Tibial artery (tissue), 4 donors: ENCODE measurements at regions of chr18 and their contacts with region 1.

Region 1: DNA sequence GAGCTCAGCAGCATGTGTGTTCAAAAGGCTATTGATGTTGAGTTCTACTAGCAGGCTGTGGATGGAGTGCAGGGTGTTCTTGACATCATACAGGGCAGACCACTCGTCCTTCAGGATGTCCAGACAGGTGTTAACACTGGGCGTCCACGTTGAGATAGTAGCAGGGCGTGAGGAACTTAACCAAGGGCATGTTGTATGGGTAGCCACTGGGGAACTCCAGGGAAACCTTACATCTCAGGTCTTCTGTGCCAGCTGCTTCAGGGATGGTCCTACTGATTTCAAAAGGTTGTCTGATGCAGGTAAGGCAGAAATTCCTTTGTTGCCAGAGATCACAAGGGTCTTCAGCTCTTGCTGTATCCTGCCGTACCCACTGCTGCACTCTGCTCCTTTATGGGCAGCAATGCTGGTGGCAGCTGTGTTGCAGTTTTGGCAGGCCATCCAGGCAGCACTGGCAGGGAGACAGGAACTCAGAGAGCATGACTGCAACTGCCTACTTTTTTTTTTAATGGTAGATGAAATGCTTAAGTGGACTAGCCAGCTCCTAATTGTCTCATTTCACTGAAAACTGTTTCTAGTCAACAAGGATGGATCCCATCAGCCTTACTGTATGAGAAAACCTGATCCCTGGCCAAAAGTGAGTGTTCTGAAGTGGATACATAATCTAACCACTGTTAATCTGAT is 32.4 kb upstream of the RBBP8 start:
- DNase-seq: no peak
- H3K4me3 ChIP-seq: no peak overlapping the region
- H3K27ac ChIP-seq: no peak overlapping the region
- H3K4me1 ChIP-seq: no peaks in the 10 kb centered on the region
- H3K27me3 ChIP-seq: no peaks in the 10 kb centered on the region
- CTCF ChIP-seq: no peak

Region 2: DNA sequence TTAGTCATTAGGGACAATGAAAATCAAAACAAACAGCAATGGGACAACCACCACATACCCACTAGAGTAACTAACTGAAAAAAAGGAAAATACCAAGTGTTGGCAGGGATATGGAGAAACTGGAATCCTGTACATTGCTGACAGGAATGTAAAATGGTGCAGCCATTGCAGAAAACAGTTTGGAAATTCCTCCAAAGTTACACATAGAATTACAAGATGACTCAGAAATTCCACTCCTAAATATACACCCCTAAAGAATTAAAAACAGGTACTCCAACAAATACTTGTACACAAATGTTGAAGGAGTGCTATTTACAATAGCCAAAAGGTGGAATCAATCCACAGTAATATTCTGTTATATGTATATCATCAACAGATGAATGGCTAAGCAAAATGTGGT is 1900.0 kb before region 1 on chr18:
- intact Hi-C with region 1: no loop called
- DNase-seq: no peak
- H3K4me3 ChIP-seq: no peak overlapping the region
- H3K27ac ChIP-seq: peak overlapping the region in 1 of 2 donors; percentile 17
- H3K4me1 ChIP-seq: peaks cover 0 to 82% (median 14%) of the 10 kb centered on the region in 4 donors
- H3K27me3 ChIP-seq: no peaks in the 10 kb centered on the region
- CTCF ChIP-seq: no peak

Region 3: DNA sequence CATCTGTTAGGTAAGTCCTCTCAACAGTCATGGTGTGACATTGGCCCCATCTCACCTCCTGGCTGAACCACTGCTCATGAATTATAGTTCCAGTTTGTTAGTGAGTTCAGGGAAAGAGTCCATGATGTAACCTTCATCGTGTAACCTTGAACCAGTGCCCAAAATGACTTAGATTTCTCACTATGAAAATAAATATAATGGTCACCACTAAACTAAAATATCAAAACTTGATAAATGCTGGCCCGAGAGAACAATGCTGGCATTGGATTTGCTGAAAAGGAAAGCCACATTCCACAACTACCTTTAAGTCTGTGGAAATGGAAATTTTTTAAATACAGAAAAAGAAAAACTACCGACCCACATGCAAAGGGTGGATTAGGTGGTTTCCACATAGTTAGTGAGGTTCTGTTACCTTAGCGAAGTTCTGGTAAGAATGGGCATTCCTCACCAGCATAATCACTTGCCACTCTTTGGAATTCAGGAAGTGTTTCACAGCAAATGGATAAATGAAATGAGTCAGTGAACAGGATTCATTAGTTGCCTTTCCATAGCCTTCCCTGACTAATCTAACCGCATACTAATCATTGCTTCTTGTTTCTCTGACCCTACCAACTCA is 349.1 kb before region 1 on chr18:
- intact Hi-C with region 1: no loop called
- DNase-seq: no peak
- H3K4me3 ChIP-seq: no peak overlapping the region
- H3K27ac ChIP-seq: peak overlapping the region; percentile 21 to 37
- H3K4me1 ChIP-seq: peaks cover 0 to 39% (median 11%) of the 10 kb centered on the region in 4 donors
- H3K27me3 ChIP-seq: no peaks in the 10 kb centered on the region
- CTCF ChIP-seq: no peak

Region 4: DNA sequence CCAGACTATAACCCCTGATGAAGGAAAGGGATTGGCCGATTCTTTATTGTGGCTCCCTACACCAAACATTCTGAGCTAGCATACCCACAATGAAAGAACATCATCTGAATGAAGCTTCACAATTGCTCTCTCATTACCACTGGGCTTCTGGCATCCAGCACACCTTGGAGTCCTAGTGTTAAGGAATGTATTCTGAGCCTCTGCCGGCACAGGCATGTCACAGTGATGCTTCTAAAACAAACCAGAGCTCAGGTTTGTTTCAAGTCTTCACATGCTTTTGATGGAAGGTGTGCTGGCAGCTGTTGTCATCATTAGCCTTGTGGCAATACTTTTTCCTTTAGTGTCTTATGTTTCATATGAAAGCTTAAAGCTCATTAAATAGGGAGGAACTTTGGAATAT is 43.8 kb before region 1 on chr18:
- intact Hi-C with region 1: loop called (anchors 10 kb)
- DNase-seq: no peak
- H3K4me3 ChIP-seq: no peak overlapping the region
- H3K27ac ChIP-seq: no peak overlapping the region
- H3K4me1 ChIP-seq: no peaks in the 10 kb centered on the region
- H3K27me3 ChIP-seq: no peaks in the 10 kb centered on the region
- CTCF ChIP-seq: no peak

Region 5: GRCh38 chr18:23207191-23207955 is 306.7 kb after region 1 on chr18:
- intact Hi-C with region 1: no loop called
- DNase-seq: no peak
- H3K4me3 ChIP-seq: no peak overlapping the region
- H3K27ac ChIP-seq: no peak overlapping the region
- H3K4me1 ChIP-seq: peaks cover 0 to 13% (median 2%) of the 10 kb centered on the region in 4 donors
- H3K27me3 ChIP-seq: no peaks in the 10 kb centered on the region
- CTCF ChIP-seq: no peak